Endothelial cell of umbilical vein (primary cell): ENCODE measurements at regions of chr16 and their contacts with region 1.

Region 1: DNA sequence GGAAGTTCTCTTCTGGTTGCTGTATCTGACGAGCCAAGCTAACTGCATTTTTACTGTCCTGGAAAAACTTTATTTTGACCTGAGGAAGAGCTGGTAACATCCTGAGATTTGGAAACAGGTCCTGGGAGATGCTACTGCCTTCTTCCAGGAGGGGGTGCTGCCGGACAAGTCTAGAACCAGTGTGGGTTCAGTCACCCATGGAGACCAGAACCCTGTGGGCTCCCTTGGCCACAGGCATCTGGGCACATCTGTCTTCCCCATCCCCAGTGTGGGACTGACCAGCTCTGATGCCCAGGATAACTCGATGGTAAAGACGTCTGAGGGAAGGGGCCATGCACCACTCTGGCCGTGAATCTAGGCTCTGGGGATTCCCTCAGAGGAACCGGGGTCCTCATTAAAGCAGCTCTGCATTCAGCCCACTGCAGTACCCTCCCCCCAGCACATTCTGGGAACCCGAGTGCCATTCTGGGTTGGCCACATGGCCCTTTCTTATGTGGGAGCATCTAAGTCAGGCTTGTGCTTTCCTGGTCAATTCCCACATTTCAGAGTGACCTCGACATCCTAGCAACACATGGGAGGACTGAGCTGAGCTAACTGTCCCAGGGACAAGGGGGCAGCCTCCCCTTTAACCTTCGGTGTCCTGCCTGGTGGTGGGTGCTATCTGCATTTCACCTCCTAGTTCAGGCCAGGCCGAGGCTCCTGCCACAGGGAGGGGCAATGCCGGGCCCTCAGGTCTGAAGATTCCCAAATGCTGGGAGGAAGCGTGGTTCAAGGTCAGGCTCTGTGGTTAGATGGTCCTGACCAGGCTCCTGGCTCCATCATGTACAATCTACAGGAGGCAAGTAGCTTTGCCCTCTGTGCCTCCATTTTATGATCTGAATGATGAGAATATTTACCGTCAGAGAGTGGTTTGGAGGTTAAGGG is 6.4 kb downstream of the C16orf86 start:
- DNase-seq: peak; percentile 79
- H3K4me3 ChIP-seq: no peak overlapping the region
- H3K27ac ChIP-seq: peak overlapping the region; percentile 73
- H3K4me1 ChIP-seq: peaks cover 26% of the 10 kb centered on the region
- H3K27me3 ChIP-seq: no peaks in the 10 kb centered on the region
- CTCF ChIP-seq: peak; percentile 80 to 82
- POLR2A ChIP-seq: peak; percentile 22

Region 2: DNA sequence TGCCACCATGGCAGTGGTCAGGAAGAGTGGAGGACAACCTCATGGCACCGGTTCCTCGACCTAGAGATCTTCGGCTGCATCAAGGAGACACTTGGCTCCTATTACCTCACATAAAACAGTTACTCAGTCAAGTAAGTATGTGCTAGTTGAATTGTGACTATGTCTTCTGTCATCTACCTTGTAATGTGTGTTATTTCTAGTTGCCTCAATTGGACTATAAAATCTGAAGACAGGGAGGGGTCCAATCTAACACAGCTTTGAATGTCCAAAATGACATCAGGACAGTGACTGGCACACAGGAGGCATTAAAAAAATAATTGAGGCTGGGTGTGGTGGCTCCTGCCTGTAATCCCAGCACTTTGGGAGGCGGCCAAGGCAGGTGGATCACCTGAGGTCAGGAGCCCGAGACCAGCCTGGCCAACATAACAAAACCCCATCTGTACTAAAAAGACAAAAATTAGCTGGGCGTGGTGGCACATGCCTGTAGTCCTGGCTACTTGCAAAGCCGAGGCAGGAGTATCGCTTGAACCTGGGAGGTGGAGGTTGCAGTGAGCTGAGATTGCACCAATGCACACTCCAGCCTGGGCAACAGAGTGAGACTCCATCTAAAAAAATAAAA is 10.9 kb after region 1 on chr16:
- CTCF ChIA-PET with region 1: interaction called, 22 read pairs
- POLR2A ChIA-PET with region 1: no interaction called
- dilution Hi-C with region 1: no loop called
- intact Hi-C with region 1: no loop called
- DNase-seq: no peak
- H3K4me3 ChIP-seq: no peak overlapping the region
- H3K27ac ChIP-seq: no peak overlapping the region
- H3K4me1 ChIP-seq: peaks cover 9% of the 10 kb centered on the region
- H3K27me3 ChIP-seq: no peaks in the 10 kb centered on the region
- CTCF ChIP-seq: no peak
- POLR2A ChIP-seq: no peak

Region 3: DNA sequence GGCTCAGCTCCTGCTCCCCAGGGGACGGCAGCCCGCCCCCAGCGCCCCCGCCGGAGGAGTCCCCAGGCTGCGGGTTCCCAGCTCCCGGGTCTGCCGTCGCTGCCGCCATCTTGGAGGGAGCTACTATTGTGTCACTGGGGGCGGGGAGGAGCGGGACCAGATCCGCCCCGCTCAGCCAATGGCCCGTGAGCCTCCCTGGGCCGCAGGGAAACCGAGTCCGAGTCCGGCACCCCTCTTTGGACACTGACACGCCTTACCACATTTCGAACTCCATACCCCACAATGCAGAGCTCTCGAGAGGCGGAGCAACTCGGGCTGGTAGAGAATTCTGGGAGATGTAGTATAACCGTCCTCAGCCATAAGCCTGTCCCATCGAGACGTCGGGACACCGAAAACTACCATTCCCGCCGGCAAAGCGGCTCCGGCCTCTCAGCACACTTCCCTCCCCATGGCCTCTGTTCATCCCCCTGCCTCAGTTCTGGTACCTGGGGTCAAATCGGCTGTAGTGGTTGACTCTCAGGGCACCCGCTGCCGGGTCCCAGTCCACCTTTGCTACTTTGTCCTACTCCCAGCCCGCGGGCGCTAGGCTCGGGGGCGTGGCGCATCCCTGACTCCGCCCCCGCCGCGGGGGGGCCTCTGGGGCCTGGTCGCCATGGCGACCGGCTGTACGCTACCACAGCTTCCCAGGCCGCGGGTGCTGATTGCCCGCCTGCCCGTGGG is 133.6 kb after region 1 on chr16 and contains the starts of genes RANBP10 and TSNAXIP1:
- CTCF ChIA-PET with region 1: interaction called, 25 read pairs
- POLR2A ChIA-PET with region 1: interaction called, 4 read pairs
- dilution Hi-C with region 1: no loop called
- intact Hi-C with region 1: loop called (anchors 1 kb)
- DNase-seq: peak; percentile 100
- H3K4me3 ChIP-seq: peak within 1 kb of the TSS; percentile 71 to 90 (median 81)
- H3K27ac ChIP-seq: peak within 1 kb of the TSS; percentile 59
- H3K4me1 ChIP-seq: peaks cover 11% of the 10 kb centered on the region
- H3K27me3 ChIP-seq: no peaks in the 10 kb centered on the region
- CTCF ChIP-seq: no peak
- POLR2A ChIP-seq: peak; percentile 96
- total RNA-seq, gene RANBP10: 20.6 and 25.6 TPM in 2 replicates
- total RNA-seq, gene TSNAXIP1: 0.95 and 1.0 TPM in 2 replicates

Region 4: GRCh38 chr16:67865316-67865715 is 192.3 kb after region 1 on chr16:
- CTCF ChIA-PET with region 1: interaction called, 26 read pairs
- POLR2A ChIA-PET with region 1: no interaction called
- dilution Hi-C with region 1: no loop called
- intact Hi-C with region 1: loop called (anchors 1 kb)
- DNase-seq: peak; percentile 40
- H3K4me3 ChIP-seq: no peak overlapping the region
- H3K27ac ChIP-seq: no peak overlapping the region
- H3K4me1 ChIP-seq: no peaks in the 10 kb centered on the region
- H3K27me3 ChIP-seq: no peaks in the 10 kb centered on the region
- CTCF ChIP-seq: peak; percentile 30 to 57
- POLR2A ChIP-seq: no peak

Region 5: GRCh38 chr16:67883872-67884261 is 210.9 kb after region 1 on chr16:
- CTCF ChIA-PET with region 1: interaction called, 20 read pairs
- POLR2A ChIA-PET with region 1: no interaction called
- dilution Hi-C with region 1: no loop called
- intact Hi-C with region 1: no loop called
- DNase-seq: peak; percentile 48
- H3K4me3 ChIP-seq: no peak overlapping the region
- H3K27ac ChIP-seq: no peak overlapping the region
- H3K4me1 ChIP-seq: no peaks in the 10 kb centered on the region
- H3K27me3 ChIP-seq: no peaks in the 10 kb centered on the region
- CTCF ChIP-seq: peak; percentile 81 to 94
- POLR2A ChIP-seq: no peak

Region 6: GRCh38 chr16:67928561-67929364 is 255.8 kb after region 1 on chr16:
- CTCF ChIA-PET with region 1: interaction called, 29 read pairs
- POLR2A ChIA-PET with region 1: no interaction called
- dilution Hi-C with region 1: loop called (anchors 25 kb)
- intact Hi-C with region 1: loop called (anchors 1 kb)
- DNase-seq: peak; percentile 50
- H3K4me3 ChIP-seq: no peak overlapping the region
- H3K27ac ChIP-seq: no peak overlapping the region
- H3K4me1 ChIP-seq: peaks cover 10% of the 10 kb centered on the region
- H3K27me3 ChIP-seq: no peaks in the 10 kb centered on the region
- CTCF ChIP-seq: peak; percentile 87 to 93
- POLR2A ChIP-seq: no peak